B cell (primary cell): ENCODE measurements at regions of chr12 and their contacts with region 1.

Region 1: GRCh38 chr12:96061864-96062453 is 26.6 kb upstream of the LTA4H start:
- DNase-seq: peak; percentile 91
- ATAC-seq: peak; percentile 97
- H3K4me3 ChIP-seq: peak overlapping the region in 1 of 5 experiments; percentile 38
- H3K4me3 Mint-ChIP-seq: peak overlapping the region; percentile 36
- H3K27ac ChIP-seq: peak overlapping the region; percentile 9 to 43
- H3K27ac Mint-ChIP-seq: peak overlapping the region; percentile 89
- H3K4me1 ChIP-seq: peaks cover 21 to 32% of the 10 kb centered on the region in 2 donors
- H3K4me1 Mint-ChIP-seq: peaks cover 25% of the 10 kb centered on the region
- H3K27me3 ChIP-seq: no peaks in the 10 kb centered on the region
- H3K27me3 Mint-ChIP-seq: no peaks in the 10 kb centered on the region
- CTCF ChIP-seq: peak; percentile 84

Region 2: GRCh38 chr12:95918194-95918993 is 143.6 kb before region 1 on chr12:
- CTCF ChIA-PET with region 1: interaction called, 25 read pairs
- POLR2A ChIA-PET with region 1: no interaction called
- intact Hi-C with region 1: loop called (anchors 1 kb)
- DNase-seq: peak; percentile 70
- ATAC-seq: peak; percentile 90
- H3K4me3 ChIP-seq: no peak overlapping the region
- H3K4me3 Mint-ChIP-seq: no peak overlapping the region
- H3K27ac ChIP-seq: no peak overlapping the region
- H3K27ac Mint-ChIP-seq: no peak overlapping the region
- H3K4me1 ChIP-seq: peaks cover 4% of the 10 kb centered on the region in 2 donors
- H3K4me1 Mint-ChIP-seq: no peaks in the 10 kb centered on the region
- H3K27me3 ChIP-seq: peaks cover 0 to 2% (median 0%) of the 10 kb centered on the region in 4 experiments
- H3K27me3 Mint-ChIP-seq: peaks cover 3% of the 10 kb centered on the region
- CTCF ChIP-seq: peak; percentile 88

Region 3: GRCh38 chr12:96044017-96044942 is 17.7 kb before region 1 on chr12:
- CTCF ChIA-PET with region 1: interaction called, 8 read pairs
- POLR2A ChIA-PET with region 1: interaction called, 3 read pairs
- intact Hi-C with region 1: loop called (anchors 2 kb)
- DNase-seq: peak; percentile 38
- ATAC-seq: peak; percentile 65
- H3K4me3 ChIP-seq: peak overlapping the region in 1 of 5 experiments; percentile 26
- H3K4me3 Mint-ChIP-seq: peak overlapping the region; percentile 74
- H3K27ac ChIP-seq: peak overlapping the region; percentile 61 to 82
- H3K27ac Mint-ChIP-seq: peak overlapping the region; percentile 87
- H3K4me1 ChIP-seq: peaks cover 61 to 64% of the 10 kb centered on the region in 2 donors
- H3K4me1 Mint-ChIP-seq: peaks cover 57% of the 10 kb centered on the region
- H3K27me3 ChIP-seq: no peaks in the 10 kb centered on the region
- H3K27me3 Mint-ChIP-seq: no peaks in the 10 kb centered on the region
- CTCF ChIP-seq: no peak

Region 4: GRCh38 chr12:96078231-96079135 is 16.5 kb after region 1 on chr12:
- CTCF ChIA-PET with region 1: no interaction called
- POLR2A ChIA-PET with region 1: no interaction called
- intact Hi-C with region 1: no loop called
- DNase-seq: no peak
- ATAC-seq: no peak
- H3K4me3 ChIP-seq: no peak overlapping the region
- H3K4me3 Mint-ChIP-seq: no peak overlapping the region
- H3K27ac ChIP-seq: no peak overlapping the region
- H3K27ac Mint-ChIP-seq: no peak overlapping the region
- H3K4me1 ChIP-seq: peaks cover 2 to 4% of the 10 kb centered on the region in 2 donors
- H3K4me1 Mint-ChIP-seq: peaks cover 2% of the 10 kb centered on the region
- H3K27me3 ChIP-seq: no peaks in the 10 kb centered on the region
- H3K27me3 Mint-ChIP-seq: no peaks in the 10 kb centered on the region
- CTCF ChIP-seq: no peak

Region 5: GRCh38 chr12:96140174-96140573 is 78.2 kb after region 1 on chr12:
- CTCF ChIA-PET with region 1: interaction called, 4 read pairs
- POLR2A ChIA-PET with region 1: no interaction called
- intact Hi-C with region 1: loop called (anchors 1 kb)
- DNase-seq: no peak
- ATAC-seq: no peak
- H3K4me3 ChIP-seq: no peak overlapping the region
- H3K4me3 Mint-ChIP-seq: no peak overlapping the region
- H3K27ac ChIP-seq: no peak overlapping the region
- H3K27ac Mint-ChIP-seq: no peak overlapping the region
- H3K4me1 ChIP-seq: peaks cover 20 to 26% of the 10 kb centered on the region in 2 donors
- H3K4me1 Mint-ChIP-seq: peaks cover 33% of the 10 kb centered on the region
- H3K27me3 ChIP-seq: no peaks in the 10 kb centered on the region
- H3K27me3 Mint-ChIP-seq: no peaks in the 10 kb centered on the region
- CTCF ChIP-seq: no peak

Region 6: DNA sequence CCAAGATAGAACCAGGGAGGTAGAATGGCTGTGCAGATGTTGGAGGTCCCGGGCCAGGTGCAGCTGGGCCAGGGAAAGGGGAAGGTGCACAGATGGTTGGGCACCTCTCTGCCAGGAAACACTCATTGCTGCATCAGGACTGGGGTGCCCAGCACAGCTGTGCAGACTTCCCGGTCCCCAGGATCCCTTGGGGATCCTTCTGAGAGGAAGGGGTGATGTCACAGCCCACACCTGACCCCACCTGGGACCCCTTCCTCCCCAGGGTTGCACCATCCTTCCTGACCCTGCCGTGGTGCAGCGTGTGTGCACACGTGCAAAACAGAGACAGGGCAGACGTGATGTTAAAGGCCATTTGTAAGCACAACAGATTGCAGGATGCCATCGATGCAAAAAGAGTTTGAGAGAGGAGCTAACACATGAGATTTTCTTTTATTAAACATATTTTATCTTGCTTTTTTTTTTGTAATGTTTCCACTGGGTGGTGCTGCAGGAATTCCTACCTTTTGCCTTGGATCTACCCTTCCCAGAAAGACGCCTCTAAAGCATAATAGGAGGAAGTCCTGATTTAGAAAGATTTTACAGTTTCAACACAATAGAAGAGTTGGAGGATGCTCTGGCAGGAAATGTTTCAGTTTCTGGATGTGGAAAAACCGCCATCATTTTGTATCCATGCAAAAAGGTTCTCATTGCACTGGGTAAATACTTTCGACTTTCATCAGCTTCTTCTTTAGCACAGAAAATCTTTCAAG is 147.0 kb after region 1 on chr12:
- CTCF ChIA-PET with region 1: interaction called, 200 read pairs
- POLR2A ChIA-PET with region 1: no interaction called
- intact Hi-C with region 1: no loop called
- DNase-seq: peak; percentile 81
- ATAC-seq: peak; percentile 87
- H3K4me3 ChIP-seq: peak overlapping the region in 1 of 5 experiments; percentile 34
- H3K4me3 Mint-ChIP-seq: peak overlapping the region; percentile 81
- H3K27ac ChIP-seq: peak overlapping the region; percentile 46 to 68
- H3K27ac Mint-ChIP-seq: peak overlapping the region; percentile 90
- H3K4me1 ChIP-seq: peaks cover 95 to 98% of the 10 kb centered on the region in 2 donors
- H3K4me1 Mint-ChIP-seq: peaks cover 91% of the 10 kb centered on the region
- H3K27me3 ChIP-seq: no peaks in the 10 kb centered on the region
- H3K27me3 Mint-ChIP-seq: no peaks in the 10 kb centered on the region
- CTCF ChIP-seq: no peak

Region 7: GRCh38 chr12:96743606-96744005 is 681.6 kb after region 1 on chr12:
- CTCF ChIA-PET with region 1: no interaction called
- POLR2A ChIA-PET with region 1: no interaction called
- intact Hi-C with region 1: no loop called
- DNase-seq: no peak
- ATAC-seq: no peak
- H3K4me3 ChIP-seq: no peak overlapping the region
- H3K4me3 Mint-ChIP-seq: no peak overlapping the region
- H3K27ac ChIP-seq: no peak overlapping the region
- H3K27ac Mint-ChIP-seq: no peak overlapping the region
- H3K4me1 ChIP-seq: no peaks in the 10 kb centered on the region
- H3K4me1 Mint-ChIP-seq: no peaks in the 10 kb centered on the region
- H3K27me3 ChIP-seq: no peaks in the 10 kb centered on the region
- H3K27me3 Mint-ChIP-seq: peaks cover 3% of the 10 kb centered on the region
- CTCF ChIP-seq: no peak